PC-3 (cell line): ENCODE measurements at regions of chr6 and their contacts with region 1.

Region 1: GRCh38 chr6:46637145-46637544 is 15.5 kb downstream of the CYP39A1 start:
- DNase-seq: peak; percentile 76
- ATAC-seq: peak; percentile 69
- H3K4me3 ChIP-seq: no peak overlapping the region
- H3K27ac ChIP-seq: 0 out of 2 replicates have a peak overlapping the region, but pooled peaks have one; percentile 7
- H3K4me1 ChIP-seq: peaks cover 27% of the 10 kb centered on the region
- H3K27me3 ChIP-seq: no peaks in the 10 kb centered on the region
- CTCF ChIP-seq: no peak

Region 2: GRCh38 chr6:46684771-46685170 is 47.6 kb after region 1 on chr6:
- CTCF ChIA-PET with region 1: no interaction called
- POLR2A ChIA-PET with region 1: interaction called, 15 read pairs
- intact Hi-C with region 1: no loop called
- DNase-seq: peak; percentile 53
- ATAC-seq: no peak
- H3K4me3 ChIP-seq: no peak overlapping the region
- H3K27ac ChIP-seq: no peak overlapping the region
- H3K4me1 ChIP-seq: no peaks in the 10 kb centered on the region; the same call in 1 of the 2 replicates
- H3K27me3 ChIP-seq: no peaks in the 10 kb centered on the region
- CTCF ChIP-seq: no peak

Region 3: GRCh38 chr6:46746696-46747095 is 109.6 kb after region 1 on chr6 and contains the start of gene ANKRD66:
- CTCF ChIA-PET with region 1: no interaction called
- POLR2A ChIA-PET with region 1: no interaction called
- intact Hi-C with region 1: no loop called
- DNase-seq: no peak
- ATAC-seq: no peak
- H3K4me3 ChIP-seq: no peak within 1 kb of the TSS
- H3K27ac ChIP-seq: no peak within 1 kb of the TSS
- H3K4me1 ChIP-seq: no peaks in the 10 kb centered on the region
- H3K27me3 ChIP-seq: no peaks in the 10 kb centered on the region
- CTCF ChIP-seq: no peak
- total RNA-seq, gene ANKRD66: not detected in 2 replicates